ENCODE measurements at regions of chr17 and their contacts with region 1.

Region 1: GRCh38 chr17:2672026-2672425 is 39.5 kb downstream of the CLUH start:
- DNase-seq: no peak
- H3K4me3 ChIP-seq: no peak overlapping the region
- H3K27ac ChIP-seq: no peak overlapping the region
- H3K4me1 ChIP-seq: no peaks in the 10 kb centered on the region
- H3K27me3 ChIP-seq: no peaks in the 10 kb centered on the region
- CTCF ChIP-seq: no peak

Region 2: DNA sequence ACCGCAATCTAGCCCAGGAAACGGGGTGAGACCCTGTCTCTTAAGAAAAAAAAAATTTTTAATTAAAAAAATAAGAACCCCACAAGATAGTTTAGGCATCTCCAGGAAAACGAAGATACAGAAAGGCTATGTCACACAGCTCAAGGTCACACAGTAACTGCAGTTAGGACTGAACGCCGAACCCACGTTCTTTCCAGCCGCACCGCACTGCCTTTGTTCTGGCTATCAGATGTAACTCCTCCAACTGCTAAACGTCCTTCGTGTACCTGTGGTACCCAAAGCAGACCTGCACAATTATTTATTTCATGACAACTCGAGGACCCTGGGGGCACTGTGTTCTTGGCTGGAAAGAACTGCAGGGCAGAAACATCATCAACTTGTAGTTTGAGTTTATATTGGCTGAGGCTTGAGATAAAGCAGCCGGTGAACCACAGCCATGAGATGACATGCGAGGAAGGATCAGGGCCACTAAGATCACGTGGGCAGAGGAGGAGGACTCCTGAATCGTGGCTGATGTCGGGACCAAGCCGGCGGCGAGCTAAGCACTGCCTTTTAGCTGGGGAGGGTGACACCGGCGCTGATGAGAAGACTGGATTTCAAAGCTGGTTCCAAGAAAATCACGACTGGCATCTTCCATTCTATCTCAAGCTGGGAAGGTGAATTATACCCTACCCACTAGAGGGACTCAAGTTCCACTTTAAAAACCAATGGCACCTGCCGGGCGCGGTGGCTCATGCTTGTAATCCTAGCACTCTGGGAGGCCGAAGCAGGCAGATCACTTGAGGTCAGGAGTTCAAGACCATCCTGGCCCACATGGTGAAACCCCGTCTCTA is 250.5 kb before region 1 on chr17:
- CTCF ChIA-PET with region 1: interaction called, 4 read pairs
- POLR2A ChIA-PET with region 1: no interaction called
- intact Hi-C with region 1: loop called (anchors 10 kb)
- DNase-seq: no peak
- H3K4me3 ChIP-seq: no peak overlapping the region
- H3K27ac ChIP-seq: no peak overlapping the region
- H3K4me1 ChIP-seq: peaks cover 19% of the 10 kb centered on the region
- H3K27me3 ChIP-seq: no peaks in the 10 kb centered on the region
- CTCF ChIP-seq: peak; percentile 27; the same call in 1 of the 2 replicates

Region 3: GRCh38 chr17:2511462-2512369 is 160.3 kb before region 1 on chr17 and contains the start of gene METTL16:
- CTCF ChIA-PET with region 1: interaction called, 4 read pairs
- POLR2A ChIA-PET with region 1: no interaction called
- intact Hi-C with region 1: loop called (anchors 10 kb)
- DNase-seq: peak; percentile 100
- H3K4me3 ChIP-seq: peak within 1 kb of the TSS; percentile 64
- H3K27ac ChIP-seq: peak within 1 kb of the TSS; percentile 91
- H3K4me1 ChIP-seq: peaks cover 6% of the 10 kb centered on the region
- H3K27me3 ChIP-seq: no peaks in the 10 kb centered on the region
- CTCF ChIP-seq: no peak
- total RNA-seq, gene METTL16: 50.8 and 51.3 TPM in 2 replicates

Region 4: DNA sequence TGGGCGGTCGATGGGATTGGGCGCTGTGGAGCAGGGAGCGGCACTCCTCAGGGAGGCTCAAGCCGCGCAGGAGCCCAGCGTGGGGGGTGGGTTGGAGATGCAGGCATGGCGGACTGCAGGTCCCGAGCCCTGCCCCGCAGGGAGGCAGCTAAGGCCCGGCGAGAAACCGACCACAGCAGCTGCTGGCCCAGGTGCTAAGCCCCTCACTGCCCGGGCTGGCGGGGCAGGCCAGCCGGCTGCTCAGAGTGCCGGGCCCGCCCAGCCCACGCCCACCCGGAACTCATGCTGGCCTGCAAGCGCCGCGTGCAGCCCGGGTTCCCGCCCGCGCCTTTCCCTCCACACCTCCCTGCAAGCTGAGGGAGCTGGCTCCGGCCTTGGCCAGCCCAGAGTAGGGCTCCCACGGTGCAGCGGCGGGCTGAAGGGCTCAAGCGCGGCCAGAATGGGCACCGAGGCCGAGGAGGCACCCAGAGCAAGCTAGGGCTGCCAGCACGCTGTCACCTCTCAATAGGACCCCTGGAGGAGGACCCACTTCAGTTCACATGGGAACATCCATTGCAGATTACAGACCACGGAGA is 139.8 kb before region 1 on chr17:
- CTCF ChIA-PET with region 1: no interaction called
- POLR2A ChIA-PET with region 1: no interaction called
- intact Hi-C with region 1: no loop called
- DNase-seq: no peak
- H3K4me3 ChIP-seq: no peak overlapping the region
- H3K27ac ChIP-seq: no peak overlapping the region
- H3K4me1 ChIP-seq: no peaks in the 10 kb centered on the region
- H3K27me3 ChIP-seq: no peaks in the 10 kb centered on the region
- CTCF ChIP-seq: no peak

Region 5: GRCh38 chr17:2592971-2593820 is 78.8 kb before region 1 on chr17 and contains the start of gene PAFAH1B1:
- CTCF ChIA-PET with region 1: no interaction called
- POLR2A ChIA-PET with region 1: no interaction called
- intact Hi-C with region 1: loop called (anchors 2 kb)
- DNase-seq: peak; percentile 95
- H3K4me3 ChIP-seq: peak within 1 kb of the TSS; percentile 97
- H3K27ac ChIP-seq: peak within 1 kb of the TSS; percentile 95
- H3K4me1 ChIP-seq: peaks cover 17% of the 10 kb centered on the region
- H3K27me3 ChIP-seq: no peaks in the 10 kb centered on the region
- CTCF ChIP-seq: 0 out of 2 replicates have a peak, but pooled peaks have one; percentile 14
- total RNA-seq, gene PAFAH1B1: 210 and 212 TPM in 2 replicates

Region 6: GRCh38 chr17:2631211-2631610 is 40.8 kb before region 1 on chr17:
- CTCF ChIA-PET with region 1: no interaction called
- POLR2A ChIA-PET with region 1: no interaction called
- intact Hi-C with region 1: no loop called
- DNase-seq: no peak
- H3K4me3 ChIP-seq: no peak overlapping the region
- H3K27ac ChIP-seq: no peak overlapping the region
- H3K4me1 ChIP-seq: no peaks in the 10 kb centered on the region
- H3K27me3 ChIP-seq: no peaks in the 10 kb centered on the region
- CTCF ChIP-seq: no peak

Region 7: DNA sequence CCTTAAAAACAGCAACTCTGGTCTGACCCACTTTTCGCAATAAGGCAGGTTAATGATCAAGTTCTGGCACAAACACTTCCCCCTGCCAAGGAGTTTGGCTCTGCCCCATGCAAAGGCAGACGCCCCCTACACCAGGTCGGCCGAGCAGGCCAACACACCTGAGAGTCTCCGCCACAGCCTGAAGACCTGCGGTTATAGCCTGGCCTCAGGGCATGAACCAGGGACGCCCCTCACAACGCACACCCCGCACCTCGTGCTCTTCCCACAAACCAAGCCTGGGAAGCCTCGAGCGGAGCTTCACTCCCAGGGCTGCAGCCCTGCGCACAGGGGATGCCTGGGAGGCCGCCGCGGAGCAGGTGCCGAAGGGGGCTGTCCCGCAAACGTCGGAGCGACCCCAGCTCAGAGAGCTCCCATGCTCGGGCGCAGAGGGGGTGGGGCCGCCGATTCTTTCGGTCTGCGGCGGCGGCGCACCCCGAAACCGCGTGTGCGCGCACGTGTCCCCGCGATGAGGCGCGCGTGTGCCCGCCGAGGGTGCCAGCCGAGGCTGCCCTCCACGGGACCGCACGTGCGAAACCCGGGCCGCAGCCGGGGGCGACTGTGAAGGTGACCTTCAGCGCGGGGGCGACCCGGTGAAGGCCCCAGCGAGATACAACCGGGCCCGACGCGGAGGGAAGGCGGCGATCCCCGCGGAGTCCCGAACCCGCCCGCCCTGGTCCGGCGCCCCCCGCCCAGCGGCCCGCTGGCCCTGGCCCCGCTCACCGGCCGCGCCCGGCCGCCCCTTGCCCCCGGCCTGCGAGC is 39.0 kb after region 1 on chr17:
- CTCF ChIA-PET with region 1: interaction called, 10 read pairs
- POLR2A ChIA-PET with region 1: no interaction called
- intact Hi-C with region 1: no loop called
- DNase-seq: peak; percentile 52
- H3K4me3 ChIP-seq: peak overlapping the region; percentile 88
- H3K27ac ChIP-seq: peak overlapping the region; percentile 81
- H3K4me1 ChIP-seq: peaks cover 34% of the 10 kb centered on the region
- H3K27me3 ChIP-seq: no peaks in the 10 kb centered on the region
- CTCF ChIP-seq: no peak